T-cell (primary cell): ENCODE measurements at regions of chr4 and their contacts with region 1.

Region 1: DNA sequence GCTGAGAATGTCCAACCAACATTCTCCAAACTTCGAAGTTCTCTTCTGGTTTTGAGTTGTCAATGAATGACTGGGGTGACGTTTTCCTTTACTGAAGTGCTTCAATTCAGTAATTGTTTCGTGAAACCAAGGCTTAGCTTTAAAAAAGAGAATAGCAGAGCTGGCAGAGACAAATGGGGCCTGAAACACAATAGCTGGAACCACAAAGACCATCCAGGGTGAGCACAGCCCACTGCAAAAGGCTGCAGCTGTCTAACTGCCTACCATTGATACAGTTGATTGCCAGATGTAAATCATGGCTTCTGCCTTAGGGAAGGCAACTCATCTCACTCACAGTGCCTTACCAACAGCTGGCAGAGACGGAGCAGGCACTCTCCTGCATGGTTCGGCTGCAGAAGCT is 78.7 kb upstream of the ZNF518B start:
- DNase-seq: no peak
- ATAC-seq: no peak
- H3K4me3 ChIP-seq: no peak overlapping the region
- H3K4me3 Mint-ChIP-seq: no peak overlapping the region
- H3K27ac ChIP-seq: no peak overlapping the region
- H3K27ac Mint-ChIP-seq: no peak overlapping the region
- H3K4me1 ChIP-seq: no peaks in the 10 kb centered on the region
- H3K4me1 Mint-ChIP-seq: no peaks in the 10 kb centered on the region
- H3K27me3 ChIP-seq: peaks cover 0 to 7% of the 10 kb centered on the region in 2 experiments
- H3K27me3 Mint-ChIP-seq: no peaks in the 10 kb centered on the region

Region 2: DNA sequence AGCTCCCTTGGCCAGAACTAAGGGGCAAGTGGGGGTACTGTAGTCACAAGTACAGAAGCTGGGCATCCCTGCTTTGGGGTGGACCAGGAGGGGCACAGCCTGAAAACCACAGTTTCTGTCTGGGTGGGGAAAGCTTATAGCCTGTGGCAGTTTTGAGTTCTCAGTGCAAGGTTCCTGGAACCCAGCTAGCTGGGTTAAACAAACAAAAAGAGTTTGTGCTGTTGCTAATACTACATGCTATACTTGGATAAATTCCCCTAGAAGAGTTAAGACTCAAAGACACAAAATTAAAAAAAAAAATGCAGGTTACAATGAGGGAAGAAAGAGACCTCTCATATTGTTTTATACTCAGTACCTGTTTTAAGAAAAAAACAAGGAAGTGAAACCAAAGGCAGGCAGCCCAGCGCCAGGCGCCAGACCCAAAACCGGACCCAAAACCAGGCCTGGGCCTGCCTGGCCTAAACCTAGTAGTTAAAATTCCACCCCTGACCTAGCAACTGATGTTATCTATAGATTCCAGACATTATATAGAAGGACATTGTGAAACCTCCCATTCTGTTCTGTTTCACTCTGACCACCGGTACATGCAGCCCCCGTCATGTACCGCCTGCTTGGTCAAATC is 565.4 kb before region 1 on chr4:
- CTCF ChIA-PET with region 1: no interaction called
- POLR2A ChIA-PET with region 1: no interaction called
- DNase-seq: no peak
- ATAC-seq: no peak
- H3K4me3 ChIP-seq: no peak overlapping the region
- H3K4me3 Mint-ChIP-seq: no peak overlapping the region
- H3K27ac ChIP-seq: no peak overlapping the region
- H3K27ac Mint-ChIP-seq: no peak overlapping the region
- H3K4me1 ChIP-seq: no peaks in the 10 kb centered on the region
- H3K4me1 Mint-ChIP-seq: no peaks in the 10 kb centered on the region
- H3K27me3 ChIP-seq: peaks cover 0 to 6% of the 10 kb centered on the region in 2 experiments
- H3K27me3 Mint-ChIP-seq: no peaks in the 10 kb centered on the region

Region 3: GRCh38 chr4:10157478-10158332 is 378.2 kb before region 1 on chr4:
- CTCF ChIA-PET with region 1: interaction called, 5 to 13 read pairs
- POLR2A ChIA-PET with region 1: no interaction called
- DNase-seq: peak in 22 of 35 experiments; percentile 6 to 61 (median 20)
- ATAC-seq: peak in 2 of 4 experiments; percentile 35 to 43
- H3K4me3 ChIP-seq: no peak overlapping the region
- H3K4me3 Mint-ChIP-seq: no peak overlapping the region
- H3K27ac ChIP-seq: no peak overlapping the region
- H3K27ac Mint-ChIP-seq: no peak overlapping the region
- H3K4me1 ChIP-seq: peaks cover 8 to 31% of the 10 kb centered on the region in 2 experiments
- H3K4me1 Mint-ChIP-seq: peaks cover 30 to 37% (median 36%) of the 10 kb centered on the region in 3 donors
- H3K27me3 ChIP-seq: no peaks in the 10 kb centered on the region
- H3K27me3 Mint-ChIP-seq: peaks cover 0 to 3% of the 10 kb centered on the region in 2 donors

Region 4: DNA sequence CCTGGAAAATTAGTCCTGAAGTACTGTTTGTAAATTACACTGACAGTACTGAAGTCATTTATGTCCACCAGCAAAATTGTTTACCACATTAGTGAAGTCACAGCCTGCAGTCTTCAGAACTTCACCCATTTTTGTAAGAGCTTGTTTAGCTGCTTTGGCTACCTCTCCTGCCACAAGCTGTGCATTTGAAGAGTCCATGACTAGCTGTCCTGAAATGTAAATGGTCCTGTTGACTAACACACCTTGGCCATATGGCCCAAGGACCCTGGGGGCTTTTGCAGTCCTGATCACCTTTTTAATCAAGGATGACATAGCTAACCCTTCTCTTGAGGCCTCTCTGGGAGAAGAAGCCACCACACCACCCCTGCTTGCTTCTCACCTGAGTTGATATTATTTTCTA is 57.3 kb before region 1 on chr4:
- CTCF ChIA-PET with region 1: no interaction called
- POLR2A ChIA-PET with region 1: no interaction called
- DNase-seq: no peak
- ATAC-seq: no peak
- H3K4me3 ChIP-seq: no peak overlapping the region
- H3K4me3 Mint-ChIP-seq: no peak overlapping the region
- H3K27ac ChIP-seq: no peak overlapping the region
- H3K27ac Mint-ChIP-seq: no peak overlapping the region
- H3K4me1 ChIP-seq: no peaks in the 10 kb centered on the region
- H3K4me1 Mint-ChIP-seq: no peaks in the 10 kb centered on the region
- H3K27me3 ChIP-seq: no peaks in the 10 kb centered on the region
- H3K27me3 Mint-ChIP-seq: peaks cover 0 to 5% of the 10 kb centered on the region in 2 donors

Region 5: GRCh38 chr4:10565166-10565780 is 29.4 kb after region 1 on chr4:
- CTCF ChIA-PET with region 1: no interaction called
- POLR2A ChIA-PET with region 1: no interaction called
- DNase-seq: no peak
- ATAC-seq: no peak
- H3K4me3 ChIP-seq: no peak overlapping the region
- H3K4me3 Mint-ChIP-seq: no peak overlapping the region
- H3K27ac ChIP-seq: no peak overlapping the region
- H3K27ac Mint-ChIP-seq: no peak overlapping the region
- H3K4me1 ChIP-seq: no peaks in the 10 kb centered on the region
- H3K4me1 Mint-ChIP-seq: peaks cover 0 to 9% (median 6%) of the 10 kb centered on the region in 3 donors
- H3K27me3 ChIP-seq: peaks cover 0 to 2% of the 10 kb centered on the region in 2 experiments
- H3K27me3 Mint-ChIP-seq: peaks cover 15 to 19% of the 10 kb centered on the region in 2 donors

Region 6: DNA sequence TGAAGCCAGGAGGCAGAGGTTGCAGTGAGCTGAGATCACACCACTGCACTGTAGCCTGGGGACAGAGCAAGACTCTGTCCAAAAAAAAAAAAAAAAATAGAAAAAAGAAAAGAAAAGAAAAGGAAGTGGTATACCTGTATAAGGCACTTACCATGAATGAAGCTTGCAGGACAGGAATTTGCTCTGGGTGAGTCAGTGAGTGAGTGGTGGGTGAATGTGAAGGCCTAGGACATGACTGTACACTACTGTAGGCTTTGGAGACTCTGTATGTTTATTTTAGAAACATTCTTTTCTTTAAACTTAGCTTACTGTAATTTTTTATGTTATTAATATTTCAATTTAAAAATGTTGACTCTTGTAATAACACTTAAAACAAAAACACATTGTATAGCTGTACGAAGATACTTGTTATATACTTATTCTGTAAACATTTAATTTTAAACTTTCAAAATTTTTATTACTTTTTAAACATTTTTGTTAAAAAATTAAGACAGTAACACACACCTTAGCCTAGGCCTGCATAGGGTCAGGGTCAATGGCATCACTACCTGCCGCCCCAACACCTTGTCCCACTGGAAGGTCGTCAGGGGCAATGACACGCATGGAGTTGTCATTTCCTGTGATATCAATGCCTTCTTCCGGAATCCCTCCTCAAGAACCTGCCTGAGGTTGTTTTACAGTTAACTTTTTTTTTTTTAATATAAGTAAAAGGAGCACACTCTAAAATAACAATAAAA is 70.0 kb after region 1 on chr4:
- CTCF ChIA-PET with region 1: no interaction called
- POLR2A ChIA-PET with region 1: no interaction called
- DNase-seq: no peak
- ATAC-seq: no peak
- H3K4me3 ChIP-seq: no peak overlapping the region
- H3K4me3 Mint-ChIP-seq: no peak overlapping the region
- H3K27ac ChIP-seq: no peak overlapping the region
- H3K27ac Mint-ChIP-seq: no peak overlapping the region
- H3K4me1 ChIP-seq: no peaks in the 10 kb centered on the region
- H3K4me1 Mint-ChIP-seq: no peaks in the 10 kb centered on the region
- H3K27me3 ChIP-seq: no peaks in the 10 kb centered on the region
- H3K27me3 Mint-ChIP-seq: no peaks in the 10 kb centered on the region